Activated CD4-positive, alpha-beta memory T cell treated with anti-CD3 and anti-CD28 coated beads, Interleukin-2, amount 10 ng/mL, durations not matched to agents 7 days and 5 days (primary cell): ENCODE measurements at regions of chr15 and their contacts with region 1.

Region 1: DNA sequence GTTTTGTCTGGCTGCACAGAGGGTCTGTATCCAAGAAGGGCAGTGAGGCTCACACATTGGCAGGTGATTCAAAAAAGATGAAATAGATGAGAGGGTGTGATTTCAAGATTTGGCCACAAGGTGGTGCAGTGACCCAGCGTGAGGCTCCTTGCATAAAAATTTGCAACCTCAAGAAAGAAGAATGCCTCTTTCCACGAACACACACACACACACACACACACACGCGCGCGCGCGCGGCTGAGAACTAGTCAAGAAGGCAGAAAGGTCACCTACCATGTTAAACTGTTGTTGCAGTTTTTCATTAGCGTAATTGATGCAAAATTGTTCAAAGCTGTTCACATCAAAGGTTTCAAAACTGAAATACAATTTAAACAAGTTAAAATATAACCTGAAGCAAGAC is 39.2 kb downstream of the MYO5C start:
- DNase-seq: peak; percentile 86
- H3K4me3 Mint-ChIP-seq: peak overlapping the region; percentile 39
- H3K27ac Mint-ChIP-seq: peak overlapping the region; percentile 77
- H3K4me1 Mint-ChIP-seq: peaks cover 68% of the 10 kb centered on the region
- H3K27me3 Mint-ChIP-seq: no peaks in the 10 kb centered on the region

Region 2: GRCh38 chr15:52227456-52227855 is 28.9 kb before region 1 on chr15:
- CTCF ChIA-PET with region 1: interaction called, 10 read pairs
- POLR2A ChIA-PET with region 1: no interaction called
- DNase-seq: peak; percentile 77
- H3K4me3 Mint-ChIP-seq: no peak overlapping the region
- H3K27ac Mint-ChIP-seq: no peak overlapping the region
- H3K4me1 Mint-ChIP-seq: peaks cover 18% of the 10 kb centered on the region
- H3K27me3 Mint-ChIP-seq: no peaks in the 10 kb centered on the region

Region 3: GRCh38 chr15:52234596-52235541 is 21.5 kb before region 1 on chr15:
- CTCF ChIA-PET with region 1: interaction called, 11 read pairs
- POLR2A ChIA-PET with region 1: interaction called, 3 read pairs
- DNase-seq: no peak
- H3K4me3 Mint-ChIP-seq: no peak overlapping the region
- H3K27ac Mint-ChIP-seq: peak overlapping the region; percentile 56
- H3K4me1 Mint-ChIP-seq: peaks cover 18% of the 10 kb centered on the region
- H3K27me3 Mint-ChIP-seq: peaks cover 2% of the 10 kb centered on the region

Region 4: DNA sequence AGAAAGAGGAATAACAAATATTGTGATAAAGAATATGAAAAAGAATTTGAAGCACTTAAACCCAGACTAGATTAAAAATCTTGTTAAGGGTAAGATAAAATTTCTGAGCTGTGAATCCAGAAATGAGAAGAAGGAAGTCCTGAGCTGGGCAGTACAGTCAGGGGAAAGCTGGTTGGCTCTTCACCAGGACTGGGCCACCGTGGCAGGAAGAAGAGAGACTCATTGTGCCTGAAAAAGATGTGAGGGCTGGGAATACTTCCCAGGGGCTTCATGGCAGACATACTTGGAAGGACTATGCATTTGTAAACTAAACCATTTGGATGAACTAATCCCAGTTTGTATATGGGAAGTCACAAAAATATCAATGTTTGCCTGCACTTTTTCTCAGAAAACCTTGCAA is 67.7 kb after region 1 on chr15:
- CTCF ChIA-PET with region 1: interaction called, 16 read pairs
- POLR2A ChIA-PET with region 1: interaction called, 6 read pairs
- DNase-seq: no peak
- H3K4me3 Mint-ChIP-seq: no peak overlapping the region
- H3K27ac Mint-ChIP-seq: no peak overlapping the region
- H3K4me1 Mint-ChIP-seq: peaks cover 3% of the 10 kb centered on the region
- H3K27me3 Mint-ChIP-seq: no peaks in the 10 kb centered on the region

Region 5: GRCh38 chr15:52331490-52332240 is 75.3 kb after region 1 on chr15:
- CTCF ChIA-PET with region 1: interaction called, 47 read pairs
- POLR2A ChIA-PET with region 1: interaction called, 7 read pairs
- DNase-seq: peak; percentile 78
- H3K4me3 Mint-ChIP-seq: peak overlapping the region; percentile 19
- H3K27ac Mint-ChIP-seq: peak overlapping the region; percentile 79
- H3K4me1 Mint-ChIP-seq: peaks cover 45% of the 10 kb centered on the region
- H3K27me3 Mint-ChIP-seq: no peaks in the 10 kb centered on the region

Region 6: DNA sequence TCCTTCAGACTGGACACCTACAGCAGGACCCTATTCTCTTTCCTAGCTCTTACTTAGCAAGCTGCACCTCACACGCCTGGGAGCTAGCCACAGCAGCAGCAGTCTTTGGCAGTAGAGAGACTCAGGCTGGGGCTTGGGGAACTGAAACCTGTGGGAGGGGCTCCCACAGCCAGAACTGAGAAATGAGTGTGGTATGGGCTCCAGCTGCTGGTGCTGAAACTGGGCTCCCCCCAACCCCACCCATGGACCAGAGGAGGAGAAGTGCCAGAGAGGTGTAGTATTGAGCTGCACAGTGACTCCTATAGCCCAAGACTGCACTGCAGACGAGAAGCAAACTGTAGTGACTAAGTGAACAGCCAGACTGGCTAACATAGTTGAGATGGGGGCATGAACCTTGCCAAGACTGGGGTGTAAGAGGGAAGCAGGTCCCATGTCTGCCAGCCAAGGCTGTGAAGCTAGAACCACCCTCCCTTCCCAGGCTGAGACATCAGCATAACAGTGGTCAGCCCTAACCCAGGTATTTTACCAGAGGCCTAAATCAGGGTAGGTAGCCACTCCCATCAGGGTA is 209.9 kb after region 1 on chr15:
- CTCF ChIA-PET with region 1: interaction called, 15 read pairs
- POLR2A ChIA-PET with region 1: interaction called, 8 read pairs
- DNase-seq: peak; percentile 67
- H3K4me3 Mint-ChIP-seq: no peak overlapping the region
- H3K27ac Mint-ChIP-seq: peak overlapping the region; percentile 52
- H3K4me1 Mint-ChIP-seq: peaks cover 50% of the 10 kb centered on the region
- H3K27me3 Mint-ChIP-seq: no peaks in the 10 kb centered on the region

Region 7: GRCh38 chr15:52735231-52736089 is 479.1 kb after region 1 on chr15:
- CTCF ChIA-PET with region 1: interaction called, 145 read pairs
- POLR2A ChIA-PET with region 1: interaction called, 16 read pairs
- DNase-seq: peak; percentile 75
- H3K4me3 Mint-ChIP-seq: no peak overlapping the region
- H3K27ac Mint-ChIP-seq: no peak overlapping the region
- H3K4me1 Mint-ChIP-seq: peaks cover 36% of the 10 kb centered on the region
- H3K27me3 Mint-ChIP-seq: peaks cover 15% of the 10 kb centered on the region